ENCODE measurements at regions of chr16 and their contacts with region 1.

Region 1: GRCh38 chr16:8943966-8944759 is 19.5 kb downstream of the USP7 start:
- DNase-seq: peak; percentile 71
- CTCF ChIP-seq: no peak

Region 2: GRCh38 chr16:8788578-8789172 is 155.5 kb before region 1 on chr16:
- CTCF ChIA-PET with region 1: no interaction called
- POLR2A ChIA-PET with region 1: no interaction called
- DNase-seq: no peak
- CTCF ChIP-seq: no peak

Region 3: GRCh38 chr16:8928467-8928957 is 15.7 kb before region 1 on chr16:
- CTCF ChIA-PET with region 1: interaction called, 109 read pairs
- POLR2A ChIA-PET with region 1: no interaction called
- DNase-seq: peak; percentile 34
- CTCF ChIP-seq: no peak

Region 4: GRCh38 chr16:9016824-9017223 is 72.7 kb after region 1 on chr16:
- CTCF ChIA-PET with region 1: no interaction called
- POLR2A ChIA-PET with region 1: no interaction called
- DNase-seq: no peak
- CTCF ChIP-seq: no peak

Region 5: GRCh38 chr16:9034056-9034455 is 89.9 kb after region 1 on chr16:
- CTCF ChIA-PET with region 1: no interaction called
- POLR2A ChIA-PET with region 1: no interaction called
- DNase-seq: no peak
- CTCF ChIP-seq: no peak

Measured in GM10248 (cell line).